Pancreas (tissue), 10 donors: ENCODE measurements at regions of chr15 and their contacts with region 1.

Region 1: DNA sequence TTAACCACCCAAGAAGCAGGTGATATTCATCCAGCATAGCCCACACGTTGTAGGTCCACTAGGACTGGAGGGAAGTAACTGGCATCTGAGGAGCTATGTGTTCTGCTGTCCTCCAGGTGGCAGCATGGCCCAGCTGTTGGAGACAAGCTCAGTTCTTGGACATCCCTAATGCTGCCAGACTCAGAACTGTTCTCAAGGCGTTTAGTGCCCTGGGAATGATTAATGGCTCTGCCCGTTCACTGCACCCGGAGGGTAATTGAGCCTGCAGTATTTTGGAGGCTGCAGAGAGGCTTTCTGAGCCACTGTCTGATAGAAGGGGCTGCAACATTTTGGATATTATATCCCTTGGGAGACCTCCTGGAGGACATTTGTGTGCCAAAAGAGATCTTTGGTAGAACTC is 521.2 kb upstream of the SEMA6D start:
- DNase-seq: peak; percentile 63 to 90 (median 77)
- ATAC-seq: peak; percentile 97 to 100 (median 100)
- H3K4me3 ChIP-seq: no peak overlapping the region
- H3K27ac ChIP-seq: no peak overlapping the region
- H3K4me1 ChIP-seq: no peaks in the 10 kb centered on the region
- H3K27me3 ChIP-seq: no peaks in the 10 kb centered on the region
- CTCF ChIP-seq: peak; percentile 53 to 74 (median 60)

Region 2: DNA sequence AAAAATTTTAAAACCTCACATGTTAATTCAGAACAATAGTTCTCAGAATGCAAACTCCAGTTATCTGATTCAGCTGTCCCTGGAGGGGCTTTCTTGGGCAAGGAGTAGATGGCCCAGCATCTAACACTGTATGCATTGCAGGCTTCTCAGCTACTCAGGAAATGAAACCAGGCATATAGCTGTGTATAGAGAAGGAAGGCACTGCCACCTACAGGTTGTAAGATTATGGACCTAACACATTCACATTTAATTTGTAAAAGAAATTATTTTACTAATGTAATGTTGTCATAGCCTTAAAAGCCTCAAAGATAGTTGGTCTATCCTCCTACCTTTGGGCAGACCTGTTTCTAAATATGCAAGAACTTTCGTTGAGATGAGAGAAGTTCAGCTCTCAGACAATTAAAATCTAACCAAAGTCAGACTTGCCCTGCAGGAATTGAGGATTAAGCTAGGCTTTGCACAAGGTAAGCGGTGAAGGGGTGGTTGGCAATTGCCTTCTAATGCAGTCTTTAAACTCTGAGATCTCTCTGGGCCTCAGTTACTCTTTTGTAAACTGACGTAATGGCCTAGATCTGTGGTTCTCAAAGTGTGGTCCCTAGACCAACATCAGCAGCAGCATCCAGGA is 792.0 kb after region 1 on chr15:
- intact Hi-C with region 1: loop called in 2 of 3 experiments (anchors 5 kb)
- DNase-seq: peak in 3 of 6 donors; percentile 12 to 48 (median 18)
- ATAC-seq: peak; percentile 88 to 98 (median 96)
- H3K4me3 ChIP-seq: no peak overlapping the region
- H3K27ac ChIP-seq: no peak overlapping the region
- H3K4me1 ChIP-seq: no peaks in the 10 kb centered on the region
- H3K27me3 ChIP-seq: no peaks in the 10 kb centered on the region
- CTCF ChIP-seq: peak; percentile 27 to 51 (median 37)

Region 3: DNA sequence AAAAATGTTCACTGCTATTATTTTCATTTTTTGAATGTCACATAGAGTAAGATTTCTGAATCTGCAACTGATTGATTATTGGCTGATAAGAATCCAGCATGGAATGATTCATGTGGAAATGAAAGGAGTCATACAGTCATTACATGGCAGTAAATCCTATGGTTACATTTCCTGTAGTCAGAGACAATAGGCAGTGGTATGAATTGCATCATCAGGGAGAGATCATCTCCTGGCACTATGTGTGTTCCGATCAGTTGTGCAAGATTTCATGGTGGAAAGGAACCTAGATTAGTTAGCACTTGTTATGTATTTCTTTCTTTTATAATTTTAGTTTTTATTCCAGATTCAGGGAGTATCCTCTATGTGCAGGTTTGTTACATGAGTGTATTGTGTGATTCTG is 1048.9 kb after region 1 on chr15:
- intact Hi-C with region 1: loop called in 1 of 3 experiments (anchors 10 kb)
- DNase-seq: no peak
- ATAC-seq: no peak
- H3K4me3 ChIP-seq: no peak overlapping the region
- H3K27ac ChIP-seq: no peak overlapping the region
- H3K4me1 ChIP-seq: no peaks in the 10 kb centered on the region
- H3K27me3 ChIP-seq: no peaks in the 10 kb centered on the region
- CTCF ChIP-seq: no peak

Region 4: GRCh38 chr15:48285329-48286214 is 1089.5 kb after region 1 on chr15:
- intact Hi-C with region 1: loop called in 1 of 3 experiments (anchors 10 kb)
- DNase-seq: peak in 4 of 6 donors; percentile 25 to 68 (median 51)
- ATAC-seq: peak; percentile 90 to 98 (median 96)
- H3K4me3 ChIP-seq: peak overlapping the region in 1 of 4 donors; percentile 13
- H3K27ac ChIP-seq: no peak overlapping the region
- H3K4me1 ChIP-seq: peaks cover 0 to 3% (median 0%) of the 10 kb centered on the region in 3 donors
- H3K27me3 ChIP-seq: no peaks in the 10 kb centered on the region
- CTCF ChIP-seq: peak; percentile 43 to 75 (median 63)